A673 (cell line): ENCODE measurements at regions of chr14 and their contacts with region 1.

Region 1: DNA sequence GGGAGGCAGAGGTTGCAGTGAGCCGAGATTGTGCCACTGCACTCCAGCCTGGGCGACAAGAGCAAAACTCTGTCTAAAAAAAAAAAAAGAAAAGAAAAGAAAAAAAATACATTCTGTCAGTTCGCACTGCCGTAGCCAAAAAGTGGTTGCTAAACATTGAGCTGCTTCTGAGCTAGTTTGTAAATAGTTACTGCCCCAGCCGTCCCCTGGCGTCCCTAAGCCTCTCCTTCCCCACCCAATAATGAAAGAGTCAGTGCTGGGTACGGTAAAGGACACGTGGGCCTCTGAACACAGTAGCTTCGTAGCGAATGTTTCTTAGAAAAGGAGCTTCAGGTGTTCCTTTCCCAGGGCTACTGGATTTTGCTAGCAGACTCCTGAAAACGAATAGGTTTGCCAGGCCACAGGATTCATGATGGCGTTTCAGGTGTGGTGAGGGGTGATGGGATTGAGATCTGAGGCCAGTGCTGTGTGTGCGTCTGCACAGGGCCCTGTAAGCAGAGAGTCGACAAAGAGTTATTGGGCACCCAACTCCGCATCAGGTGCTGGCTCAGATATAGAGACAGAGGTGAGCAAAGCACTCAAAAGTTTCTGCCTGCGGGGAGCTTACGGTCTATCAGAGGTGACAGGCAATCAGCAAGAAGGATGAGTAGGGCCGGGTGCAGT is 94.1 kb downstream of the LGMN start:
- DNase-seq: no peak
- H3K4me3 ChIP-seq: no peak overlapping the region
- H3K27ac ChIP-seq: no peak overlapping the region
- H3K4me1 ChIP-seq: no peaks in the 10 kb centered on the region
- H3K27me3 ChIP-seq: no peaks in the 10 kb centered on the region
- CTCF ChIP-seq: no peak

Region 2: DNA sequence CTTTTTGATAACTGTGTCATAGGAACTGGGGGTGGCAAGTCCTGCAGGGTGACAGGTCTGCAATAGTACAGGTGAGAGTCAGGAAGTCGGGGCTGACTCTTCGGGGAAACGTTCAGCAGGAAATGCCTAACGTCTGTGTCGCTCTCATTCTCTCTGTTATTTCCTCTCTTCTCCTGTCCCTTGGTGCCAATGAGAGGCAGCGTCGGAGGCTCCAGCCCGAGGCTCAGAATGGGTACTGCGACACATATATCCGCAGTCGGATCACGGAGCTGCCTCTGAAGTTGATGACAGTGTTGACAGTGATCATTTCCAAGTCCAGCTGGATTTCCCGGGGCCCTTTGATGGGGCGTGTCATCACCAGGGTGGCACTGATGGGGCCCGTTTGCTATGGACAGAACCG is 784.4 kb before region 1 on chr14:
- CTCF ChIA-PET with region 1: no interaction called
- POLR2A ChIA-PET with region 1: interaction called, 10 read pairs
- intact Hi-C with region 1: no loop called
- DNase-seq: no peak
- H3K4me3 ChIP-seq: no peak overlapping the region
- H3K27ac ChIP-seq: no peak overlapping the region
- H3K4me1 ChIP-seq: no peaks in the 10 kb centered on the region
- H3K27me3 ChIP-seq: no peaks in the 10 kb centered on the region
- CTCF ChIP-seq: no peak